Naive thymus-derived CD4-positive, alpha-beta T cell (primary cell): ENCODE measurements at regions of chr7 and their contacts with region 1.

Region 1: DNA sequence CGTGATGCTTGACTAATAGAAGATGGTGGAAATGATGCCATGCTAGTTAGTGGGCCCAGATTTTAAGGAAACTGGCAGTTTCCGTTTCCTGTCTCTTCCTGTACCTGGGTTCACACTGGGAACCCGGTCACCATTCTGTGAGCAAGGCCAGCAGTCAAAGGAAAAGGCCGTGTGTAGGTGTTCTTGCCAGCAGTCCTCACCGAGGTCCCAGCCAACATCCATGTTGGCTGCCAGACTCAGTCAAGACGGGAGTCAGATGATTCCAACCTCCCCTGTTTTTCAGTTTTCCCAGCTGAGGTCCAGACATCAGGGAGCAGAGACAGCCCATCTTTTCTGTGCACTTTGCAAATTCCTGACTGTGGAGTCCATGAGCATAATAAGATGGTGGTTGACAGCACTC is 15.2 kb upstream of the PILRB start:
- DNase-seq: no peak
- ATAC-seq: no peak
- H3K4me3 ChIP-seq: no peak overlapping the region
- H3K4me3 Mint-ChIP-seq: no peak overlapping the region
- H3K27ac ChIP-seq: peak overlapping the region; percentile 38
- H3K27ac Mint-ChIP-seq: peak overlapping the region; percentile 49 to 90 (median 73)
- H3K4me1 ChIP-seq: peaks cover 4 to 9% of the 10 kb centered on the region in 2 donors
- H3K4me1 Mint-ChIP-seq: peaks cover 6 to 46% (median 34%) of the 10 kb centered on the region in 7 donors
- H3K27me3 ChIP-seq: no peaks in the 10 kb centered on the region
- H3K27me3 Mint-ChIP-seq: no peaks in the 10 kb centered on the region

Region 2: GRCh38 chr7:100271716-100272537 is 70.8 kb before region 1 on chr7:
- CTCF ChIA-PET with region 1: no interaction called
- POLR2A ChIA-PET with region 1: no interaction called
- intact Hi-C with region 1: loop called (anchors 2 to 5 kb)
- DNase-seq: peak; percentile 97 to 99 (median 98)
- ATAC-seq: peak; percentile 96
- H3K4me3 ChIP-seq: peak overlapping the region; percentile 61
- H3K4me3 Mint-ChIP-seq: peak overlapping the region; percentile 78 to 89 (median 82)
- H3K27ac ChIP-seq: peak overlapping the region; percentile 61
- H3K27ac Mint-ChIP-seq: peak overlapping the region in 4 of 9 donors; percentile 21 to 84 (median 46)
- H3K4me1 ChIP-seq: peaks cover 0 to 4% of the 10 kb centered on the region in 2 donors
- H3K4me1 Mint-ChIP-seq: peaks cover 8 to 19% (median 17%) of the 10 kb centered on the region in 7 donors
- H3K27me3 ChIP-seq: no peaks in the 10 kb centered on the region
- H3K27me3 Mint-ChIP-seq: peaks cover 0 to 4% (median 0%) of the 10 kb centered on the region in 5 donors

Region 3: DNA sequence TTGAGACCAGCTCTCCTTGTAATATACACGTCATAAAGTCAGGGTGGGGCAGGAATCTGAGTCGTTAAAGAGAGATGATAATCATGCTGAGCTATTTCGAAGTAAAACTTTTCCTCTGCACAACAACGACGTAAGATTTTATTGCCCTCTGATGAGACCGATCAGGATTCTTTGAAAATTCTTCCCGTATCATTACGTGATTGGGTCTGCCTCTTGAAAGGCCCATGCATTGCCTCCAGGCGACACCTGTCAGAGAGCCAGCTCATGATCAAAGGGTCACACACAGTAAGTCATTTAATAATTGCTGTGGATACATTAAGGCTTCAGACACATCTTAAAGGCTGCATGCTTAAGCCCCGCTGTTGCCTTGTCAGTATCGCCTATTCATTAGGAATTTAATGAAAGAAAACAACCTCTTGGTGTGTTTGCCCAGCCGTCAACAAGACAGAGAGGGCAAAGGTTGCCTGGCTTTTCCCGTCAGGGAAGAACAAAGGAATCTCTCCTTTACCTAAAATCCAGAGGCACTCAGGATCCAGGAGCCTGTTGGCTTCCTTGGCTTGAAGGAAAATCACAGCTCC is 1754.9 kb after region 1 on chr7:
- CTCF ChIA-PET with region 1: no interaction called
- POLR2A ChIA-PET with region 1: no interaction called
- intact Hi-C with region 1: no loop called
- DNase-seq: no peak
- ATAC-seq: no peak
- H3K4me3 ChIP-seq: no peak overlapping the region
- H3K4me3 Mint-ChIP-seq: no peak overlapping the region
- H3K27ac ChIP-seq: no peak overlapping the region
- H3K27ac Mint-ChIP-seq: no peak overlapping the region
- H3K4me1 ChIP-seq: no peaks in the 10 kb centered on the region
- H3K4me1 Mint-ChIP-seq: no peaks in the 10 kb centered on the region
- H3K27me3 ChIP-seq: no peaks in the 10 kb centered on the region
- H3K27me3 Mint-ChIP-seq: no peaks in the 10 kb centered on the region